Psoas muscle (tissue), 8 donors: ENCODE measurements at regions of chr5 and their contacts with region 1.

Region 1: DNA sequence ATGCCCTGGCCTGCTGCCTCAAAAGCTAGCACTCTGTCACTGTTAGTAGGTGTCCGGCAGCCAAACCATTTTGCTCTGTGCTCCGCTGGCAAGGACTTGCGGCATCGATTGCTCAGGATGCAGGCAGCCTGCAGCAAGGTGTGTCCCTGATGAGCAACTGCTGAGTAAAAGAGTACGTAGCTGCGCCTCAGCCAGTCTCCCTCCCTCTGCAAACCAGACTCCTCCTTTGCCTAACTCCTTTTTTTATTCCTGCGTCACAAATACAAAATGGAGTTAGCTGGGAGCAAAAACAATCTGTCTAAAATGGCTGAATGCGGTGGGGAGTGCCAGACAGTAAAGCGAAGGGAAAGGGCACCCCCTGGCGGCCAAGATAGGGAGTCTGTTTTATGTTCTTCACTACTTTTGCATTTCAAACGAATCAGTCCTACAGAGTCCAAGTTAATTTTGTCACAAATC is 61.1 kb downstream of the DIAPH1 start:
- DNase-seq: peak; percentile 86 to 90
- ATAC-seq: peak; percentile 65 to 84 (median 68)
- H3K4me3 ChIP-seq: peak overlapping the region; percentile 6
- H3K27ac ChIP-seq: peak overlapping the region; percentile 86
- H3K4me1 ChIP-seq: peaks cover 27% of the 10 kb centered on the region
- H3K27me3 ChIP-seq: no peaks in the 10 kb centered on the region
- CTCF ChIP-seq: peak; percentile 88

Region 2: DNA sequence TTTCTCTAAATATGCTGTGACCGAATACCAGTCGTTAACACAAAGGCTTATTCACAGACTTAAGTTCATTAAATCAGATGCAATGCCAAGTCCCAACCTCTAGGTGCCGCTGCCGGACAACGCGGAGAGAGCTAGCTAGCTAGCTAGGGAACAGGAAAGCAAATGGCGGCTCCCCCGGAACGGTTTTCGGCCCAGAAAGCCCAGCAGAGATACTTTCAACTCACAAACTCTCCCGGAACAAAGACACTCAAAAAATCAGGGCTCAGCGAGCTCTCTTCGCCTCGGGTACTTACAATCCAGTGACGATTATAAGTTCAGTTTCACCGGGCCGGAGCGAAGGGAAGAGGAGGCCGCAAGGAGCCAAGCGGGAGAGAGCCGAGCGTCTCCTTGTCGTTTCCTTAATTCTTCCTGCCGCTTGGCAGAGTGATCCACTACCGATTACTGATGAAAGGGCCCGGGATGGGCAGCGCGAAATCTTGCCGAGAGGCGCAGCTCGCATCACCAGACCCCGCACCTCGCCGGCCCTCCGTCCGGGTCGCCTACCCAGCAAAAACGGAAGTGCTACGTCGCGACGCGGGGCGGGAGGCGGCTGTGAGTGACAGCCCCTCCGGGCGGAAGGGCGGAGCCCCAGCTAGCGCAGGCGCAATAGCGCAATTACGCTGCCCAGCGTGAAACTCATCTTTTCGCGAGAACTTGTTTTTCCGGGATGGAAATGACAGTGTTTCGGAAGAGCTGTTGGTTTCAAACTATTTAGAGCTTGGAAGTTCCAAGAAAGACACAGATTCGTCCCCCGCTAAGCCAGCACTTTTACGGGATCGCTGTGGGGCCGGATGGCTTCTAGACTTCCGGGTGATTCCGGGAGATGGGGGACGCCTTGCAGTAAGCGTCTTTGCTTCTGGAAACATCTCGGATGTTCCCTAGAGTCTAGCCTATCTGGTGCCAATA is 237.2 kb before region 1 on chr5 and contains the start of gene TAF7:
- intact Hi-C with region 1: loop called in 1 of 2 experiments (anchors 5 kb)
- DNase-seq: peak; percentile 91 to 97
- ATAC-seq: peak; percentile 96 to 99 (median 98)
- H3K4me3 ChIP-seq: peak within 1 kb of the TSS; percentile 81
- H3K27ac ChIP-seq: peak within 1 kb of the TSS; percentile 98
- H3K4me1 ChIP-seq: peaks cover 17% of the 10 kb centered on the region
- H3K27me3 ChIP-seq: no peaks in the 10 kb centered on the region
- CTCF ChIP-seq: peak; percentile 89
- total RNA-seq, gene TAF7: 92.9 to 139 (median 117) TPM

Region 3: GRCh38 chr5:141420855-141421496 is 136.7 kb before region 1 on chr5 and contains the start of gene PCDHGA11:
- intact Hi-C with region 1: loop called (anchors 5 kb)
- DNase-seq: peak in 1 of 2 donors; percentile 29
- ATAC-seq: peak; percentile 49 to 73 (median 66)
- H3K4me3 ChIP-seq: peak within 1 kb of the TSS; percentile 66
- H3K27ac ChIP-seq: peak within 1 kb of the TSS; percentile 7
- H3K4me1 ChIP-seq: no peaks in the 10 kb centered on the region
- H3K27me3 ChIP-seq: peaks cover 0 to 29% (median 6%) of the 10 kb centered on the region in 3 donors
- CTCF ChIP-seq: peak; percentile 68
- total RNA-seq, gene PCDHGA11: 0.94 to 4.4 (median 2.9) TPM

Region 4: DNA sequence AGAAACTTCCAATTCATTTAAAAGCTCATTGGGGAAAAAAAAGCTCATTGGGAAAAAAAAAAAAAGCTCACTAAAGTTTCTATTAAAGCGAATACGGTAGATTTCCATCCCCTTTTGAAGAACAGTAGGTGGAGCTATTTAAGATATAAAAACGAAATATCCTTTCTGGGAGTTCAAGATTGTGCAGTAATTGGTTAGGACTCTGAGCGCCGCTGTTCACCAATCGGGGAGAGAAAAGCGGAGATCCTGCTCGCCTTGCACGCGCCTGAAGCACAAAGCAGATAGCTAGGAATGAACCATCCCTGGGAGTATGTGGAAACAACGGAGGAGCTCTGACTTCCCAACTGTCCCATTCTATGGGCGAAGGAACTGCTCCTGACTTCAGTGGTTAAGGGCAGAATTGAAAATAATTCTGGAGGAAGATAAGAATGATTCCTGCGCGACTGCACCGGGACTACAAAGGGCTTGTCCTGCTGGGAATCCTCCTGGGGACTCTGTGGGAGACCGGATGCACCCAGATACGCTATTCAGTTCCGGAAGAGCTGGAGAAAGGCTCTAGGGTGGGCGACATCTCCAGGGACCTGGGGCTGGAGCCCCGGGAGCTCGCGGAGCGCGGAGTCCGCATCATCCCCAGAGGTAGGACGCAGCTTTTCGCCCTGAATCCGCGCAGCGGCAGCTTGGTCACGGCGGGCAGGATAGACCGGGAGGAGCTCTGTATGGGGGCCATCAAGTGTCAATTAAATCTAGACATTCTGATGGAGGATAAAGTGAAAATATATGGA is 127.2 kb before region 1 on chr5 and contains the start of gene PCDHGA12:
- intact Hi-C with region 1: loop called in 1 of 2 experiments (anchors 5 kb)
- DNase-seq: peak; percentile 69 to 82
- ATAC-seq: peak; percentile 90 to 95 (median 90)
- H3K4me3 ChIP-seq: peak within 1 kb of the TSS; percentile 64
- H3K27ac ChIP-seq: peak within 1 kb of the TSS; percentile 56
- H3K4me1 ChIP-seq: no peaks in the 10 kb centered on the region
- H3K27me3 ChIP-seq: peaks cover 0 to 11% (median 6%) of the 10 kb centered on the region in 3 donors
- CTCF ChIP-seq: peak; percentile 66
- total RNA-seq, gene PCDHGA12: 2.6 to 6.9 (median 3.6) TPM

Region 5: GRCh38 chr5:141524604-141525597 is 32.8 kb before region 1 on chr5:
- intact Hi-C with region 1: loop called (anchors 5 kb)
- DNase-seq: peak; percentile 84 to 91
- ATAC-seq: peak; percentile 78 to 84 (median 82)
- H3K4me3 ChIP-seq: no peak overlapping the region
- H3K27ac ChIP-seq: peak overlapping the region; percentile 77
- H3K4me1 ChIP-seq: peaks cover 65% of the 10 kb centered on the region
- H3K27me3 ChIP-seq: no peaks in the 10 kb centered on the region
- CTCF ChIP-seq: peak; percentile 99